ENCODE measurements at regions of chr19 and their contacts with region 1.

Region 1: DNA sequence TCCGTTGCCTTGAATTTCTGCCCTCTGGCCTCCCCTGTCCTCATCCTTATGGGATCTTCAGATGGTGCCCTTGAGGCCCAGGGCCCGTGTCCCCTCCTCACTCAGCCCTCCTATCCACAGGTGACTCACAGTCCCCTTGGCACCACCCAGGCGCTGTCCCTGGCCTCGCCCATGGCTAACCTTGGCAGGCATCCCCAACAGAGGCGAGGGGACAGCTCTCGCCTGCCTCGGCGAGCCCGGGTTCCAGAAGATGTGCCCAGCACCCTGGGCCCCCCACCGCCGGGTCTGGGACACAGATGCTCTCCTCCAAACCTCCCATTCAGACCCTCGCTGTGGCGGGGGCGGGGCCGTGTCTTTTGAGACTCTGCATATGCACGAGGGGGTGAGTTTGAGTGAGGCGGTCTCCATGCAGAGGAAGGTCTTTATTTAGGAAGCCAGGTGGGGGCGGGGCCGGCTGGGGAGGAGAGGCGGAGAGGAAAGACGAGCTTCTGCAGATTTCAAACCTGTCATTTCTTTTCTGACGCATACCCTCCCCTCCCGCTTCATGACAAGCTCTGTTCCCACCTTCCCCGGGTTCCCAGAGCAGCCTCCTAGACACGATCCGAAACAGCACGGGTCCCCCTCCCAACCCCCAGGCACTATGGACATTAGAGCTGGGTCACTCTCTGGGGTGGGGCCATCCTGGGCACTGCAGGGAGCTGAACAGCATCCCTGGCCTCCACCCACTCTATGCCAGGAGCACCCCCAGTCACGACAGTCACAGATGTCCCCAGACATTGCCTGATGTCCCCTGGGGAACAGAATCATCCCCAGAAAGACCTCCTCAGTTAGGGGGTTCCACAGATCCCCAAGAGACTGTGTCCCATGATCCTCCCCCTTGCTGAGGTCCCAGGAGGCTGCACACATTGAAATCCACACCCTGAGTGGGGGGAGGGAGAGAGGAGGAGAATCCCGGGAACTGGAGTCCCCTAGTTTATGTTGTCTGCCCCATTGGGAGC is 48.5 kb downstream of the GNG7 start:
- DNase-seq: peak in 2 of 10 donors; percentile 85 to 86

Region 2: GRCh38 chr19:2686360-2686759 is 32.4 kb after region 1 on chr19:
- intact Hi-C with region 1: loop called (anchors 5 kb)
- DNase-seq: peak in 8 of 10 donors; percentile 39 to 92 (median 58)

Region 3: GRCh38 chr19:2869618-2870017 is 215.6 kb after region 1 on chr19:
- intact Hi-C with region 1: loop called (anchors 5 kb)
- DNase-seq: no peak